Activated CD4-positive, alpha-beta T cell treated with anti-CD3 and anti-CD28 coated beads for 36 hours (primary cell): ENCODE measurements at regions of chr5 and their contacts with region 1.

Region 1: GRCh38 chr5:76544268-76544926 is 78.8 kb downstream of the F2RL2 start:
- DNase-seq: peak; percentile 79
- ATAC-seq: peak; percentile 34
- H3K4me3 Mint-ChIP-seq: peak overlapping the region; percentile 73
- H3K27ac Mint-ChIP-seq: peak overlapping the region; percentile 100
- H3K4me1 Mint-ChIP-seq: peaks cover 90% of the 10 kb centered on the region
- H3K27me3 Mint-ChIP-seq: no peaks in the 10 kb centered on the region

Region 2: DNA sequence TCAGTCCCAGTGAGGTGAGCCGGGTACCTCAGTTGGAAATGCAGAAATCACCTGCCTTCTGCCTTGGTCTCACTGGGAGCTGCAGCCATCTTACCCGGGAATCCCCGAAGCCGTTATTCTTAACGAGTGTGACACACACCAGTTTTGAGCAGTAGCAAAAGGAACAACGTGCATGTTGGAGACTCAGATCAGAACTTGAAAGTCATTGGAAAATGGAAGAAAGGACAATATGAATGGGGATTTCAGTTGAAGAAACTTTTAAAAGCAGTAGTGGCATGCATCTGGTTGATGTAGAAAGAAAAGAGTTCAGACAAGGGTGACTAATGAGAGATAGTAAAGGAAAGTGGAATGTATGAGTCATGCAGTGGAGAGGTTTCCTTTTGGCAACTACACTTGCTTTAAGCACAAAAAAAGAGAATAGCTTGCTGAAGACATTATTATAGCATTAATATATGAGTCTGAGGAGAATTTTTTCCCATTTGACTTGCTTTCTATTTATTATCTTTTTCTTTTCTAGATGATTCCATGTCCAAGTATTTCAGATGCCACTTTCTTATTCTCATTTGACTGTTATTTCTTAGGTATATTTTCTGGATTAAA is 977.6 kb before region 1 on chr5:
- CTCF ChIA-PET with region 1: no interaction called
- POLR2A ChIA-PET with region 1: no interaction called
- intact Hi-C with region 1: loop called (anchors 10 kb)
- DNase-seq: peak; percentile 78
- ATAC-seq: peak; percentile 85
- H3K4me3 Mint-ChIP-seq: peak overlapping the region; percentile 56
- H3K27ac Mint-ChIP-seq: peak overlapping the region; percentile 96
- H3K4me1 Mint-ChIP-seq: peaks cover 63% of the 10 kb centered on the region
- H3K27me3 Mint-ChIP-seq: no peaks in the 10 kb centered on the region

Region 3: DNA sequence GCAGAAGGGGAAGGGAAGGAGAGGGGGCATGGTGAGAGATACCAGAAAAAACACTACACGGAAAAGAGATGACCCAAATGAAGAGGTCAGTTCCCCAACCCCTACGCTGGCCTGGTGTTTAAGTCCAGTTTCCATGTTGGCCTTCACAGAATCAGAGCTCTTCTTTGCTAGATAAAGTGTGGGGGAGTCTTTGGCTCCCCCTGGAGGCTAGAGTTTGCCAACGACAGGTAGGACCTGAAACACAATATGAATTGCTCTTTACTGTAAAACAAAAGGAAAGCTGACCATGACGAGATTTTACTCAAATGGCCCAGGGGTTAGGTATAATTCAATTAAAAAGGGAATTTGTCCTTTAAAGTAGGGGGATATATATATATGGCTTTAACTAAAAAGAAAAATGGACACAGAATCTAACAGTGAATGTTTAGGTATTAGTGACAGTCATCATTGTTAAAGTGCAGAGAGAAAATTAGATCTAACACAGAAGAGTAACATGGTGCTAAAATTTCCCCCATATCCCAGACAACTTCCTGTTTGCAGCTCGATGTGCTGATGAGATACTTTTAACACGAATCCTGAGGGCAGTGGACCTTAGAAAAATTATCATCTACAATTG is 369.2 kb before region 1 on chr5:
- CTCF ChIA-PET with region 1: interaction called, 6 read pairs
- POLR2A ChIA-PET with region 1: no interaction called
- intact Hi-C with region 1: loop called (anchors 5 to 10 kb)
- DNase-seq: peak; percentile 74
- ATAC-seq: no peak
- H3K4me3 Mint-ChIP-seq: no peak overlapping the region
- H3K27ac Mint-ChIP-seq: no peak overlapping the region
- H3K4me1 Mint-ChIP-seq: peaks cover 32% of the 10 kb centered on the region
- H3K27me3 Mint-ChIP-seq: no peaks in the 10 kb centered on the region

Region 4: GRCh38 chr5:76331126-76331525 is 213.3 kb before region 1 on chr5:
- CTCF ChIA-PET with region 1: interaction called, 14 read pairs
- POLR2A ChIA-PET with region 1: interaction called, 4 read pairs
- intact Hi-C with region 1: loop called in 1 of 2 experiments (anchors 2 kb)
- DNase-seq: peak; percentile 52
- ATAC-seq: peak; percentile 69
- H3K4me3 Mint-ChIP-seq: no peak overlapping the region
- H3K27ac Mint-ChIP-seq: peak overlapping the region; percentile 59
- H3K4me1 Mint-ChIP-seq: peaks cover 64% of the 10 kb centered on the region
- H3K27me3 Mint-ChIP-seq: no peaks in the 10 kb centered on the region

Region 5: DNA sequence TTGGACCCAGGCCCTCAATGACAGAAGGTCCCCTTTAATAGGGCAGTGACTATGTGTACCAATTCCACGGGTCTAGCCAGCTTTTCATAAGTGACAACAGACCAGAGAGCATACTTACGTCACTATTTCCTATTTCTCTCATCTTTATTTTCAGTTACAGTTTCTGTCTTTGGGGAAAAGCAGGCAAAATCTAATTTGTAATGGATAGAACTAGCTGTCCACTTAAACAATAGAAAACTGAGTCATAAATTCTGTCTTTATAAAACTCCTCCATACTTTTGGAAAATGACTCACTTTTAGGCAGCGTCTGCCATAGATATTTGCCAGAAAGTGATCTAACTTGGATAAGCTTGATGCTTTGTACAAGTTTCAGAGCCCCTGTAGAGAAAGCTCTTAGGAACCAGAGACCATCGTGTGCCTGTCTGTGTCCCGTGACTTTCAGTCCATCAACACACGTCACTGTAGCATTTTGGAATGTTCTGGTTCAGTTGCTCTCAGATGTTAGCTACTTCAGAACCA is 23.1 kb before region 1 on chr5:
- CTCF ChIA-PET with region 1: interaction called, 19 read pairs
- POLR2A ChIA-PET with region 1: interaction called, 12 read pairs
- intact Hi-C with region 1: loop called (anchors 1 kb)
- DNase-seq: no peak
- ATAC-seq: peak; percentile 85
- H3K4me3 Mint-ChIP-seq: no peak overlapping the region
- H3K27ac Mint-ChIP-seq: peak overlapping the region; percentile 91
- H3K4me1 Mint-ChIP-seq: peaks cover 67% of the 10 kb centered on the region
- H3K27me3 Mint-ChIP-seq: no peaks in the 10 kb centered on the region

Region 6: DNA sequence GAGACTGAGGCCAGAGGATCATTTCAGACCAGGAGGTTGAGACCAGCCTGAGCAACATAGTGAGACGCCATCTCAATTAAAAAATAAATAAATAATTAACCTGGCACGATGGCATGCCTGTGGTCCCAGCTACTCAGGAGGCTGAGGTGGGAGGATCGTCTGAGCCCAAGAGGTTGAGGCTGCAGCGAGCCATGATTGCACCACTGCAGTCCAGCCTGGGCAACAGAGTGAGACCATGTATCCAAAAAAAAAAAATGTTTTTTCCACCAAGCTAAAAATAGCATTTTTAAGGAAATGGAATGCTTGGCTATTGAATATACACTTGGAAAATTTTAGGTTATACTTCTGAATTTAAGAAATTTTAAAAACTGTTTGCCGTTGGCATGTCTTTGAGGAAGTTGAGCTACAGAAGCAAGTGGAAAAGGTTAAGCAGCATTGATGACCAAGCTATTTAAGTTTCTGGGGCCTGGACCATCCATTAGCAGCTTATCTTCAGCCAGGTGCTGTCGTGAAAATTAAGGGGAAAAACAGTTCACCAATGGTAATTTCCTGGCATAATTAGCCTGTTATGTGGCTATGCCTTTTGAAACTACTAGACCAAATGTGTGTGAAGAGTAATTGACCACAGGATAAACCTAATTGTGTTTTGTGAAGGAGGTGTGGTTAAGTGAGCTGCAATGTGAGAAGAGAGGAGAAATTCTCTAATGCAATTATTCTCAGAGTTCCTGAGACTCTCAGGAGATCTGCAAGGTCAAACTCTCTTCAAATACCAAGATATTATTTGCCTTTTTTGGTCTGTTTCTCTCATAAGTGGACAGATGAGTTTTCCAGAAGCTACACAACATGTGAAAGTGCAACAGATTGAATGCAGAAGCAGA is 192.5 kb after region 1 on chr5:
- CTCF ChIA-PET with region 1: interaction called, 3 read pairs
- POLR2A ChIA-PET with region 1: no interaction called
- intact Hi-C with region 1: loop called (anchors 2 to 5 kb)
- DNase-seq: no peak
- ATAC-seq: no peak
- H3K4me3 Mint-ChIP-seq: no peak overlapping the region
- H3K27ac Mint-ChIP-seq: no peak overlapping the region
- H3K4me1 Mint-ChIP-seq: peaks cover 24% of the 10 kb centered on the region
- H3K27me3 Mint-ChIP-seq: no peaks in the 10 kb centered on the region